MCF 10A (cell line): ENCODE measurements at regions of chr20 and their contacts with region 1.

Region 1: GRCh38 chr20:6767536-6768227 is at the start of gene BMP2:
- DNase-seq: peak; percentile 41
- H3K4me3 Mint-ChIP-seq: peak within 1 kb of the TSS; percentile 86
- H3K27ac Mint-ChIP-seq: no peak within 1 kb of the TSS
- H3K4me1 Mint-ChIP-seq: peaks cover 20% of the 10 kb centered on the region
- H3K27me3 Mint-ChIP-seq: no peaks in the 10 kb centered on the region
- CTCF ChIP-seq: no peak
- total RNA-seq, gene BMP2: 6.7 and 7.7 TPM in 2 replicates

Region 2: DNA sequence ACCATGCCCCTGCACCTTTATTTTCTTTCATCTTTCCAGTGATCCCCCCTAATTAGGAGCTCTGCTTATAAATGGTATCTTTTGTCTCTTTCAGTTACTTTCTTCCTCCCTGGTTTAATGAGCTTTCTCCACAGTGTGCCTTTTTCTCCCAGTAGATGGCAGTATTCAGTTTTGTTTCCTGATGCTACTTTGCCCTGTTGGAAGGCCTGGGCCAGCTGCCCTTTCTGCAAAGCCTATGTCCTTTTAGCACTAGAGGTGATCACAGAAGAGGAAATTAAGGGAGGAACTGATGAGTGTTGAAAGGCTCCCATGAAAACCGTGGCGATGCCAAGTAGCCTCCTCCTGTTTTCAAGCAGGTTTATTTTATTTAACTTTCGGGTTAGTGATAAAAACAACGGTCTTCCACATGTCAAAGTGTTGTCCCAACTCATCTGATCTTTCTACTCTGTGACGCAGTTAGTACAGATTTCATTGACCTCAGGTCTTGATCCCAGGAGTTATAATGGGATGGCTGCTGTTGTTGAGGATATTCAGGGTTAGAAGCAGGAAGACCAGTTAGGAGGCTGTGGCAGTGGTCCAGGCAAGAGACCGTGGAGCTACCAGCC is 184.4 kb before region 1 on chr20:
- CTCF ChIA-PET with region 1: interaction called, 33 read pairs
- POLR2A ChIA-PET with region 1: no interaction called
- intact Hi-C with region 1: loop called (anchors 2 kb)
- DNase-seq: peak; percentile 78
- H3K4me3 Mint-ChIP-seq: no peak overlapping the region
- H3K27ac Mint-ChIP-seq: no peak overlapping the region
- H3K4me1 Mint-ChIP-seq: peaks cover 23% of the 10 kb centered on the region
- H3K27me3 Mint-ChIP-seq: no peaks in the 10 kb centered on the region
- CTCF ChIP-seq: peak; percentile 66

Region 3: GRCh38 chr20:6651016-6651415 is 116.7 kb before region 1 on chr20:
- CTCF ChIA-PET with region 1: interaction called, 14 read pairs
- POLR2A ChIA-PET with region 1: interaction called, 14 read pairs
- intact Hi-C with region 1: loop called (anchors 5 kb)
- DNase-seq: peak; percentile 99
- H3K4me3 Mint-ChIP-seq: no peak overlapping the region
- H3K27ac Mint-ChIP-seq: peak overlapping the region; percentile 46
- H3K4me1 Mint-ChIP-seq: peaks cover 34% of the 10 kb centered on the region
- H3K27me3 Mint-ChIP-seq: no peaks in the 10 kb centered on the region
- CTCF ChIP-seq: no peak

Region 4: GRCh38 chr20:6756693-6757595 is 10.7 kb before region 1 on chr20:
- CTCF ChIA-PET with region 1: interaction called, 54 read pairs
- POLR2A ChIA-PET with region 1: interaction called, 3 read pairs
- intact Hi-C with region 1: no loop called
- DNase-seq: no peak
- H3K4me3 Mint-ChIP-seq: no peak overlapping the region
- H3K27ac Mint-ChIP-seq: no peak overlapping the region
- H3K4me1 Mint-ChIP-seq: peaks cover 4% of the 10 kb centered on the region
- H3K27me3 Mint-ChIP-seq: no peaks in the 10 kb centered on the region
- CTCF ChIP-seq: no peak

Region 5: GRCh38 chr20:6828794-6829423 is 61.2 kb after region 1 on chr20:
- CTCF ChIA-PET with region 1: interaction called, 9 read pairs
- POLR2A ChIA-PET with region 1: no interaction called
- intact Hi-C with region 1: loop called (anchors 5 kb)
- DNase-seq: peak; percentile 82
- H3K4me3 Mint-ChIP-seq: no peak overlapping the region
- H3K27ac Mint-ChIP-seq: no peak overlapping the region
- H3K4me1 Mint-ChIP-seq: no peaks in the 10 kb centered on the region
- H3K27me3 Mint-ChIP-seq: no peaks in the 10 kb centered on the region
- CTCF ChIP-seq: peak; percentile 47

Region 6: DNA sequence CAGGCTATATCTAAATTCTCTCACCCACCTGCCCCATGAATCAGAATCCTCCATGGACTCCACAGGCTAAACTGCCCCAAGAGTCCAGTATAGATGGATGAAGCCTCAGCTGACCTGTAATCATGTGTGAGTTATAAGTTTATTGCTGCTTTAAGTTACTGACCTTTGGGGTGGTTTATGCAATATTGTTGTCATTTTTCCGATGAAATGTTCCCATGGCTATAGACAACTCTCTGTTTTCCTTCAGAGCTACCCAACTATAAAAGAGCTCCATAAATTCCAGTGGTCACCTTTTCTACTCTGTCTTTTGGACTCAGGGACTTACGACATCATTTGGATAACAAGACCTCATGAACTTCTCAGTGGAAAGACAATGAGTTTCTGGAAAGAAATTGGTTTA is 211.9 kb after region 1 on chr20:
- CTCF ChIA-PET with region 1: no interaction called
- POLR2A ChIA-PET with region 1: no interaction called
- intact Hi-C with region 1: no loop called
- DNase-seq: no peak
- H3K4me3 Mint-ChIP-seq: no peak overlapping the region
- H3K27ac Mint-ChIP-seq: no peak overlapping the region
- H3K4me1 Mint-ChIP-seq: no peaks in the 10 kb centered on the region
- H3K27me3 Mint-ChIP-seq: no peaks in the 10 kb centered on the region
- CTCF ChIP-seq: no peak

Region 7: DNA sequence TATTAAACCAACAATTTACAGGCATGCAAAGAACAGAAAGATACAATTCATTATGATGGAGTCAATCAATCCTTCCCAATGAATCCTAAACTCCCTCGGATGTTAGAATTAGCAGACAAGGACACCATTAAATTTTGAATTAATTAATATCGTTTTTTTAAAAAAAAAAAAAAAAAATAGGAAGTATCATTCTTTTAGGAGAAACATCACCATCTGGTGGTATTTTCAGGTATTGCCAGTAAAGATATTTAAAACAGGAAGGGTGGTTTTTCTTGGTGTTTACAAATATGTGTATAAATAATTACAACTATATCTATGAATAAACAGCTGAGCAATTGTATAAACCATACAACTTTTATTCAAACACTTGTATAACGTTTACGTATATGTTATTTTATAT is 608.2 kb after region 1 on chr20:
- CTCF ChIA-PET with region 1: interaction called, 15 read pairs
- POLR2A ChIA-PET with region 1: no interaction called
- intact Hi-C with region 1: loop called (anchors 2 kb)
- DNase-seq: peak; percentile 53
- H3K4me3 Mint-ChIP-seq: no peak overlapping the region
- H3K27ac Mint-ChIP-seq: no peak overlapping the region
- H3K4me1 Mint-ChIP-seq: no peaks in the 10 kb centered on the region
- H3K27me3 Mint-ChIP-seq: no peaks in the 10 kb centered on the region
- CTCF ChIP-seq: peak; percentile 35